Naive thymus-derived CD4-positive, alpha-beta T cell (primary cell): ENCODE measurements at regions of chrX and their contacts with region 1.

Region 1: DNA sequence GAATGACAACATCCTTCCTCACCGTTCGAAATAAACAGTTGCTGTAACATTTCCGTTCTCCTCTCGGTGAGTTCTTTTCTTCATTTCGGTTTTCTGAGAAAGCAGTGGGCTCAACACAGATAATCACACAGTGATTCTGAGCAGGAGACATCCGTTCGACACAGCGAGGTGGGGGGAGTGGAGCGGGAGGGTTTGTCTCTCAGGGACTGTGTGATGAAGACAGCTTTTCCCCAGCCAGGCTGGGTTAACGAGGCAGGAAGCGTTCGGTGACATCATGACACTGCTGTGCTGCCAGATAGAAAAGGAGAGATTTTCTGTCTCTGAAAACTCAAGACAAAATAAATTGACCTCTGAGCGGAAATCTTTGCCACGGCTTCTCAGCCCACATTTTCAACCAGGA is 119.3 kb downstream of the CRLF2 start:
- DNase-seq: peak in 8 of 9 donors; percentile 41 to 77 (median 62)
- ATAC-seq: peak; percentile 87
- H3K4me3 ChIP-seq: peak overlapping the region; percentile 13
- H3K4me3 Mint-ChIP-seq: peak overlapping the region; percentile 63 to 87 (median 78)
- H3K27ac ChIP-seq: peak overlapping the region; percentile 56
- H3K27ac Mint-ChIP-seq: peak overlapping the region; percentile 72 to 97 (median 89)
- H3K4me1 ChIP-seq: no peaks in the 10 kb centered on the region
- H3K4me1 Mint-ChIP-seq: peaks cover 0 to 22% (median 14%) of the 10 kb centered on the region in 7 donors
- H3K27me3 ChIP-seq: no peaks in the 10 kb centered on the region
- H3K27me3 Mint-ChIP-seq: peaks cover 0 to 3% (median 0%) of the 10 kb centered on the region in 5 donors

Region 2: GRCh38 chrX:1165535-1166196 is 72.5 kb after region 1 on chrX:
- CTCF ChIA-PET with region 1: no interaction called
- POLR2A ChIA-PET with region 1: no interaction called
- intact Hi-C with region 1: loop called in 1 of 2 experiments (anchors 10 kb)
- DNase-seq: peak in 5 of 9 donors; percentile 30 to 66 (median 46)
- ATAC-seq: peak; percentile 44
- H3K4me3 ChIP-seq: no peak overlapping the region
- H3K4me3 Mint-ChIP-seq: peak overlapping the region; percentile 1 to 75 (median 60)
- H3K27ac ChIP-seq: no peak overlapping the region
- H3K27ac Mint-ChIP-seq: peak overlapping the region in 4 of 9 donors; percentile 79 to 90 (median 82)
- H3K4me1 ChIP-seq: peaks cover 0 to 14% of the 10 kb centered on the region in 2 donors
- H3K4me1 Mint-ChIP-seq: peaks cover 12 to 32% (median 24%) of the 10 kb centered on the region in 7 donors
- H3K27me3 ChIP-seq: no peaks in the 10 kb centered on the region
- H3K27me3 Mint-ChIP-seq: peaks cover 0 to 27% (median 11%) of the 10 kb centered on the region in 5 donors

Region 3: DNA sequence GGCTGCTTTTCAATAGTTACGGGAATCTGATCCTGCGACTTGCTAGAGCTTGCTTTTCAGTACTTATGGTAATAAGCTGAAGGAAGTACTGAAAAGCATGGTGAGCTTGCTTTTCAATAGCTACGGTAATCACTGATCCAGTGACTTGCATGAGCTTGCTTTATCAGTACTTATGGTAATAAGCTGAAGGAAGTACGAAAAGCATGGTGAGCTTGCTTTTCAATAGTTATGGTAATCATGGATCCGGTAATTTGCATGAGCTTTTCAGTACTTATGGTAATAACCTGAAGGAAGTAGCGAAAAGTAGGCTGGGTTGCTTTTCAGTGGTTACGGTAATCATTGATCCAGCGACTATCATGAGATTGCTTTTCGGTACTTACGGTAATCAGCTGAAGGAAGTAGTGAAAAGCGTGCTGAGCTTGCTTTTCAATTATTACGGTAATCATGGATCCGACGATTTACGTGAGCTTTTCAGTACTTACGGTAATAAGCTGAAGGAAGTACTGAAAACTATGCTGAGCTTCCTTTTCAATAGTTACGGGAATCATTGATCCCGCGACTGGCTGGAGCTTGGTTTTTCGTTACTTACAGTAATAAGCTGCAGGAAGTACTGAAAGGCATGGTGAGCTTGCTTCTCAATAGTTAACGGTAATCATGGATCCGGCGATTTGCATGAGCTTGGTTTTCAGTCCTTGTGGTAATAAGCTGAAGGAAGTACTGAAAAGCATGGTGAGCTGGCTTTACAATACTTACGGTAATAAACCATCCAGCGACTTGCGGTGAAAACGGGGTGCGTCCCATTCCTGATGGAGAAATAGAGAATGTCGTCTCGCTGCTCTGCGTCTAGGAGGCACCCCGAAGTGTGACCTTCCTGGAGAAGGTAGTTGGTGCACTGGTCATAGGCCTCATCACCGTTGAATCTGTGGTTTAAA is 112.8 kb after region 1 on chrX:
- CTCF ChIA-PET with region 1: no interaction called
- POLR2A ChIA-PET with region 1: no interaction called
- intact Hi-C with region 1: loop called in 1 of 2 experiments (anchors 5 kb)
- DNase-seq: peak; percentile 14 to 77 (median 69)
- ATAC-seq: peak; percentile 70
- H3K4me3 ChIP-seq: peak overlapping the region; percentile 56
- H3K4me3 Mint-ChIP-seq: peak overlapping the region; percentile 76 to 87 (median 83)
- H3K27ac ChIP-seq: no peak overlapping the region
- H3K27ac Mint-ChIP-seq: peak overlapping the region in 7 of 9 donors; percentile 22 to 68 (median 36)
- H3K4me1 ChIP-seq: peaks cover 6 to 11% of the 10 kb centered on the region in 2 donors
- H3K4me1 Mint-ChIP-seq: peaks cover 15 to 42% (median 32%) of the 10 kb centered on the region in 7 donors
- H3K27me3 ChIP-seq: no peaks in the 10 kb centered on the region
- H3K27me3 Mint-ChIP-seq: no peaks in the 10 kb centered on the region